K562 (cell line): ENCODE measurements at regions of chr6 and their contacts with region 1.

Region 1: GRCh38 chr6:159693128-159693893 is at the start of gene SOD2:
- DNase-seq: peak; percentile 90 to 98 (median 96)
- ATAC-seq: peak; percentile 85
- H3K4me3 ChIP-seq: peak within 1 kb of the TSS; percentile 93
- H3K27ac ChIP-seq: peak within 1 kb of the TSS; percentile 98
- H3K4me1 ChIP-seq: peaks cover 19 to 25% of the 10 kb centered on the region in 2 experiments; a peak in 4 of 5 replicates
- H3K27me3 ChIP-seq: no peaks in the 10 kb centered on the region
- CTCF ChIP-seq: 0 out of 6 replicates have a peak, but pooled peaks of 1 of the 3 experiments have one; percentile 0
- EP300 ChIP-seq: no peak
- POLR2A ChIP-seq: peak; percentile 92
- RAD21 ChIP-seq: 0 out of 4 replicates have a peak, but pooled peaks of 1 of the 2 experiments have one; percentile 24
- polyA plus RNA-seq, gene SOD2: 39.8 to 58.3 TPM

Region 2: GRCh38 chr6:159679091-159680077 is 13.9 kb before region 1 on chr6:
- CTCF ChIA-PET with region 1: no interaction called
- POLR2A ChIA-PET with region 1: interaction called, 12 read pairs
- in situ Hi-C with region 1: no loop called
- intact Hi-C with region 1: no loop called
- DNase-seq: no peak
- ATAC-seq: no peak
- H3K4me3 ChIP-seq: no peak overlapping the region
- H3K27ac ChIP-seq: no peak overlapping the region
- H3K4me1 ChIP-seq: no peaks in the 10 kb centered on the region
- H3K27me3 ChIP-seq: no peaks in the 10 kb centered on the region
- CTCF ChIP-seq: no peak
- EP300 ChIP-seq: no peak
- POLR2A ChIP-seq: no peak
- RAD21 ChIP-seq: no peak

Region 3: DNA sequence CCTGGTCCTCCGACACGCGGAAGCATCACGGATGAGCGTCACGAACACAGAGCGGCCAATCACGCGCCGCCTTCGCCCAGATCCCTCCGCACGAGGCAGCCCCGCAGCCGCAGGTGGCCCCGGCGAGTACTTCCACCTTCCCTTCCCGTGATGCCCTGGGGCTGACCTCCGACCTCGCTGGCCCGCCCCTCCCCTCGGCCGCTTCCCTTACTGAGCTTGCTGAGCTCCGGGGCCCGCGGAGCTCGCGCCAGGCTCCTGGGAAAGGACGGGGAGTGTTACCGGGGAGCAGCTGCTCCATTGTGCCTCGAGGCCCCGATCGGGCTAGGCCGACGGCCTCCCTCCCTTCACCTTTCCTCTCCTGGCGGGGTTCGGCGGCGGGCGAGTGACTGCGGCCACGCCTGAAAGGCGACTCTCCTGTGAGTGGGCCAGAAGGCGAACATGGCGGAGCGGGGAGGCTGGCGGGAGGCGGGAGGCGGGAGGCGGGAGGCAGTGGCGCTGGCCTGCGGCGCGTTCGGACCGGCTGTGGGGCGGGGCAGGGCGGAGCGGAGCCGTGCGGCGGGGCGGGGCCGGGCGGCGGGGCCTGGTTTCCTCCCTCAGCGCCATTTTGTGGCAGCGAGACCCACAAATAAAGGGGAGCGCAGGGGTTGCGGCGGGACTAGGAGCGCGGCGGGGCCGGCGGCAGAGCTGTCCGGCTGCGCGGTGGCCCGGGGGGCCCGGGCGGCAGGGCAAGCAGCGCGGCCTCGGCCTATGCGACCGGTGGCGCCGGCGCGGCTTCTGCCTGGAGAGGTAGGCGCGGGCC is 33.8 kb after region 1 on chr6 and contains the start of gene WTAP:
- CTCF ChIA-PET with region 1: no interaction called
- POLR2A ChIA-PET with region 1: interaction called, 16 read pairs
- in situ Hi-C with region 1: no loop called
- intact Hi-C with region 1: loop called (anchors 1 kb)
- DNase-seq: peak; percentile 94 to 99 (median 95)
- ATAC-seq: peak; percentile 89
- H3K4me3 ChIP-seq: peak within 1 kb of the TSS; percentile 88
- H3K27ac ChIP-seq: peak within 1 kb of the TSS; percentile 98
- H3K4me1 ChIP-seq: peaks cover 6 to 10% of the 10 kb centered on the region in 2 experiments; a peak in 4 of 5 replicates
- H3K27me3 ChIP-seq: no peaks in the 10 kb centered on the region
- CTCF ChIP-seq: no peak
- EP300 ChIP-seq: no peak; the same call in none of the 2 replicates
- POLR2A ChIP-seq: peak; percentile 100
- RAD21 ChIP-seq: no peak
- polyA plus RNA-seq, gene WTAP: 73.9 to 115 TPM

Region 4: GRCh38 chr6:159761873-159762680 is 68.8 kb after region 1 on chr6 and contains the start of gene ACAT2:
- CTCF ChIA-PET with region 1: no interaction called
- POLR2A ChIA-PET with region 1: interaction called, 5 read pairs
- in situ Hi-C with region 1: no loop called
- intact Hi-C with region 1: loop called (anchors 2 kb)
- DNase-seq: peak; percentile 98 to 100 (median 99)
- ATAC-seq: peak; percentile 98
- H3K4me3 ChIP-seq: peak within 1 kb of the TSS; percentile 66
- H3K27ac ChIP-seq: peak within 1 kb of the TSS; percentile 87
- H3K4me1 ChIP-seq: peaks cover 16 to 26% of the 10 kb centered on the region in 2 experiments; a peak in 4 of 5 replicates
- H3K27me3 ChIP-seq: no peaks in the 10 kb centered on the region
- CTCF ChIP-seq: no peak
- EP300 ChIP-seq: 0 out of 2 replicates have a peak, but pooled peaks have one; percentile 1
- POLR2A ChIP-seq: peak; percentile 94
- RAD21 ChIP-seq: no peak
- polyA plus RNA-seq, gene ACAT2: 247 to 309 TPM

Region 5: DNA sequence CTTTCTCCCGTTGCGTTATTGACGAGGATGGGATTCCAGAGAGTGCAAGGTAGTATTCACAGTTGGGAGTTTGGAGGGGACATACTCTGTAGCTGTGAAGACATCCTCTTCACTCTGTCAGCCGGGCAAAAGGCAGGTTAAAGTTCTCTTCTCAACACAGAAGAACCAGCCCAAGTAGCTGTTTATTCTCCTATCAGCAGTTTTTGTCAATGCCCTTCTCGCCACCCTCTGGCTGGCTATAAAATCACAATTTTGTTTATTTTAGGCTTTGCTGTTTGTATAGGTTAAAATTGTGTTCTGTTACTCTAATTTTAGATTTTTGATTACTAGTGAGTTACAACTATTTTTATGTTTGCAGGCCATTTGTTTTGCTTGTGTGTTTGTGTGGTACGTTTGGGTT is 159.6 kb after region 1 on chr6:
- CTCF ChIA-PET with region 1: interaction called, 3 read pairs
- POLR2A ChIA-PET with region 1: interaction called, 3 read pairs
- in situ Hi-C with region 1: no loop called
- intact Hi-C with region 1: loop called (anchors 1 kb)
- DNase-seq: peak in 1 of 4 experiments; percentile 18
- ATAC-seq: peak; percentile 62
- H3K4me3 ChIP-seq: no peak overlapping the region
- H3K27ac ChIP-seq: no peak overlapping the region
- H3K4me1 ChIP-seq: no peaks in the 10 kb centered on the region
- H3K27me3 ChIP-seq: peaks cover 3 to 4% of the 10 kb centered on the region in 2 experiments; a peak in 3 of 5 replicates
- CTCF ChIP-seq: peak; percentile 27 to 69 (median 47); a peak in 5 of 6 replicates
- EP300 ChIP-seq: no peak
- POLR2A ChIP-seq: no peak
- RAD21 ChIP-seq: peak; percentile 66 to 76

Region 6: GRCh38 chr6:160102956-160103824 is 409.9 kb after region 1 on chr6:
- CTCF ChIA-PET with region 1: interaction called, 3 read pairs
- POLR2A ChIA-PET with region 1: no interaction called
- in situ Hi-C with region 1: no loop called
- intact Hi-C with region 1: loop called (anchors 5 kb)
- DNase-seq: peak; percentile 39 to 59 (median 47)
- ATAC-seq: peak; percentile 30
- H3K4me3 ChIP-seq: no peak overlapping the region
- H3K27ac ChIP-seq: no peak overlapping the region
- H3K4me1 ChIP-seq: peaks cover 32% of the 10 kb centered on the region in 2 experiments
- H3K27me3 ChIP-seq: no peaks in the 10 kb centered on the region; a peak in 1 of 5 replicates
- CTCF ChIP-seq: peak; percentile 54 to 75 (median 62)
- EP300 ChIP-seq: no peak
- POLR2A ChIP-seq: no peak
- RAD21 ChIP-seq: peak in 1 of 2 experiments; percentile 63; a peak in 3 of 4 replicates

Region 7: DNA sequence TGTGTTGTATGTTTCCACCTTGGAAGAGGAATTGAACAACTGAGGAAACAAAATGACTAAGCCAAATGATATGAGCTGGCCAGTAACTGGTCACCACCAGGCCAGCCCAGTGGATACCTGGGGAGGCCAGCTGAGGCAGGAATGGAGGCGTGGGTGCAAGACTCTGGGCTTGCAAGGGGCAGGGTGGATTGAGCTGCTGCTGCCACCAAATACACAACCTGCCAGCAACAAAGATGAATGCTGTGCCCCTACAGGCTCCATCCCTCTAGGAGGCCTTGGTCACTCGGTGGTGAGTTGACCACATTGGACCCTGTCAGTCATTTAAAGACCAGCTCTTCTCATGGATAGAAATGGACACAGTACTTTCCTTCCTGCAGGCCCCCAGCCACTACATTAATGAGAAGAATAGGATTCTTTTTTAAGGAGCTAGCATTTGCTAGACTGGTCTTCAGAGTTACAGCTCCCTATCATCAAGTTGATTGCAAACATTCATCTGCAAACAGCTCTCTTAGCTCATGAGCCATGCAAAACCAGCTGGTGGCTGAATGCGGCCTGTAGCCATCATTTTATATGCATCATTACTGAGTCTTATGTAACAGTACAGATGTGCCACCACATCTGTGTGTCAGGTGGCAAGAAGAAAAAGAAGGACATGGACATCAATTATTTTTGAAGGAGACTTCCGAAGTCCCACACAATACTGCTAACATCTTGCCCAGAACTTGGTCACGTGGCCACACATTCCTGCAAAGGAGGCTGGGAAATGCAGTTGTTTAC is 628.6 kb after region 1 on chr6:
- CTCF ChIA-PET with region 1: no interaction called
- POLR2A ChIA-PET with region 1: no interaction called
- in situ Hi-C with region 1: no loop called
- intact Hi-C with region 1: no loop called
- DNase-seq: no peak
- ATAC-seq: no peak
- H3K4me3 ChIP-seq: no peak overlapping the region
- H3K27ac ChIP-seq: no peak overlapping the region
- H3K4me1 ChIP-seq: no peaks in the 10 kb centered on the region
- H3K27me3 ChIP-seq: peaks cover 0 to 7% of the 10 kb centered on the region in 2 experiments; a peak in 1 of 5 replicates
- CTCF ChIP-seq: no peak
- EP300 ChIP-seq: no peak
- POLR2A ChIP-seq: no peak
- RAD21 ChIP-seq: no peak